CD4-positive, alpha-beta T cell (primary cell): ENCODE measurements at regions of chr10 and their contacts with region 1.

Region 1: GRCh38 chr10:91409869-91410637 is at the start of gene HECTD2:
- DNase-seq: peak; percentile 61 to 94 (median 82)
- ATAC-seq: peak; percentile 85
- H3K4me3 ChIP-seq: peak within 1 kb of the TSS; percentile 92
- H3K4me3 Mint-ChIP-seq: peak within 1 kb of the TSS; percentile 92
- H3K27ac ChIP-seq: peak within 1 kb of the TSS; percentile 82 to 86
- H3K27ac Mint-ChIP-seq: peak within 1 kb of the TSS; percentile 86
- H3K4me1 ChIP-seq: peaks cover 14% of the 10 kb centered on the region
- H3K4me1 Mint-ChIP-seq: peaks cover 11% of the 10 kb centered on the region
- H3K27me3 ChIP-seq: peaks cover 3 to 8% of the 10 kb centered on the region in 2 experiments
- H3K27me3 Mint-ChIP-seq: no peaks in the 10 kb centered on the region
- CTCF ChIP-seq: peak; percentile 19
- total RNA-seq, gene HECTD2: 0.92 to 1.0 TPM

Region 2: DNA sequence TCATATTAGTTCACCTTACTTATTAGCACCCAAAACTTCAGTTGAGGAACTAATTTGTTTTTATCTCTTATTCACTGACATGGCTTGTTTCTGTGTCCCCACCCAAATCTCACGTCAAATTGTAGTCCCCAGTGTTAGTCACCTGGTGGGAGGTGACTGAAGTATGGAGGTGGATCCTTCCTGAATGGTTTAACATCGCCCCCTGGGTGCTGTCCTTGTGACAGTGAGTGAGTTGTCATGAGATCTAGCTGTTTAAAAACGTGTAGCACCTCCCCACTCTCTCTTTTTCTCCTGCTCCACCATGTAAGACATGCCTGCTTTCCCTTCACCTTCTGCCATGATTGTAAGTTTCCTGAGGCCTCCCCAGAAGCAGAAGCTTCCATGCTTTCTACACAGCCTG is 74.9 kb before region 1 on chr10:
- CTCF ChIA-PET with region 1: no interaction called
- POLR2A ChIA-PET with region 1: no interaction called
- intact Hi-C with region 1: loop called in 1 of 2 experiments (anchors 2 kb)
- DNase-seq: no peak
- ATAC-seq: no peak
- H3K4me3 ChIP-seq: no peak overlapping the region
- H3K4me3 Mint-ChIP-seq: no peak overlapping the region
- H3K27ac ChIP-seq: no peak overlapping the region
- H3K27ac Mint-ChIP-seq: no peak overlapping the region
- H3K4me1 ChIP-seq: no peaks in the 10 kb centered on the region
- H3K4me1 Mint-ChIP-seq: no peaks in the 10 kb centered on the region
- H3K27me3 ChIP-seq: no peaks in the 10 kb centered on the region
- H3K27me3 Mint-ChIP-seq: peaks cover 7% of the 10 kb centered on the region
- CTCF ChIP-seq: no peak

Region 3: DNA sequence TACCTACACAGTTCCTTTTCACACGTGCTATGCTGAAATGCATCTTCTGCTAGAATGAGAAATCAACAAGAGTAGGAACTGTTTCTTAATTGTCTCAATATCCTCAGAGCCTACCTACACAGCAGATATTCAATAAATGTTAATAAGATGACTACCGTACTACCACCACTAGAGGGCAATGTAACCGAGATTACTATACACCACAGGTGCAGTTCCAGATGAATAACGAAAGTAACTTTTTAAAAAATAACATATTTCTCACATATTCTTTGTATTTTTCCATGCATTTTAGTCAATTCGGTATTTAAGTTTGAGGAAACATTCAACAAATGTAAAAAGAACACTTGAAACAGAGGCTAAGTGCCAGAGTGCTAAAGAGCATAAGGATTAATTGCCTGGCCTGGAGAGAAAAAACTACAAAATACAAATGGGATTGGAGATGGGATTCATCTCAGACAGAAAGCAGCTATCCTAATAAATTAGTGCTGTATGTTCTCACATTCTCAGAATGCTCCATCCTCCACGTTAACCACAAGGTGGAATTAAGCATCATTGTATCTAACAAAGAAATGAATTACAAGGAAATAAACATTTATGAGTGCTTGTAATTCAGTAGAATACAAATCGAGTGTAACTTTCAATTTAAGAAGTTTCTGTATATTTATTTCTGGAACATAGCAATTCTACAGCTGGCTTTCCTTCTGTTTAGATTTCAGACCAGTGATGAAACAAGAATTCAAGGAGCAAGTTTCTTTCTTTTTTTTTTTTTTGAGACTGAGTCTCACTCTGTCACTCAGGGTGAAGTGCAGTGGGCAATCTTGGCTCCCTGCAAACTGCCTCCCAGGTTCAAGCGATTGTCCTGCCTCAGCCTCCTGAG is 20.2 kb before region 1 on chr10:
- CTCF ChIA-PET with region 1: interaction called, 6 read pairs
- POLR2A ChIA-PET with region 1: interaction called, 3 read pairs
- intact Hi-C with region 1: loop called (anchors 1 to 2 kb)
- DNase-seq: peak in 4 of 14 experiments; percentile 31 to 85 (median 80)
- ATAC-seq: peak; percentile 99
- H3K4me3 ChIP-seq: no peak overlapping the region
- H3K4me3 Mint-ChIP-seq: no peak overlapping the region
- H3K27ac ChIP-seq: no peak overlapping the region
- H3K27ac Mint-ChIP-seq: no peak overlapping the region
- H3K4me1 ChIP-seq: no peaks in the 10 kb centered on the region
- H3K4me1 Mint-ChIP-seq: peaks cover 9% of the 10 kb centered on the region
- H3K27me3 ChIP-seq: peaks cover 0 to 10% of the 10 kb centered on the region in 2 experiments
- H3K27me3 Mint-ChIP-seq: peaks cover 28% of the 10 kb centered on the region
- CTCF ChIP-seq: peak; percentile 78

Region 4: DNA sequence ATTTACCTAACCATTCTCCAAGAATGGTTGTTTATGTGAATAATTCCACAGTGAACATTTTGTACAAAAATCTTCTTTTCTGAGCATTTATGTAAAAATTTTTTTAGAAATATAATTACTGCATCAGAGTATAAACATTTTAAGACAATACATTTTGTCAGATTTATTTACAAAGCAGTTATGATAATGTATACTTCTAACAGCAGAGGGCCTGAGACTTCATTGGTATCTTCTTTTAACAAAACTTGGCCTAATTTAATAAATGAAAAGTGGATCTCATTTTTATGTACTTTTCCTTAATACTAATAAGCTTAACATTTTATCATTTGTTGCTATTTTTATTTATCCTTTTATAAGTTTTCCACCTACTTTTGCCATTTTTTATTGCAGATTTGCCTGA is 69.5 kb after region 1 on chr10:
- CTCF ChIA-PET with region 1: no interaction called
- POLR2A ChIA-PET with region 1: no interaction called
- intact Hi-C with region 1: no loop called
- DNase-seq: no peak
- ATAC-seq: no peak
- H3K4me3 ChIP-seq: no peak overlapping the region
- H3K4me3 Mint-ChIP-seq: no peak overlapping the region
- H3K27ac ChIP-seq: no peak overlapping the region
- H3K27ac Mint-ChIP-seq: no peak overlapping the region
- H3K4me1 ChIP-seq: no peaks in the 10 kb centered on the region
- H3K4me1 Mint-ChIP-seq: no peaks in the 10 kb centered on the region
- H3K27me3 ChIP-seq: no peaks in the 10 kb centered on the region
- H3K27me3 Mint-ChIP-seq: no peaks in the 10 kb centered on the region
- CTCF ChIP-seq: no peak

Region 5: GRCh38 chr10:92156874-92157773 is 747.1 kb after region 1 on chr10:
- CTCF ChIA-PET with region 1: no interaction called
- POLR2A ChIA-PET with region 1: no interaction called
- intact Hi-C with region 1: no loop called
- DNase-seq: no peak
- ATAC-seq: no peak
- H3K4me3 ChIP-seq: no peak overlapping the region
- H3K4me3 Mint-ChIP-seq: no peak overlapping the region
- H3K27ac ChIP-seq: no peak overlapping the region
- H3K27ac Mint-ChIP-seq: no peak overlapping the region
- H3K4me1 ChIP-seq: no peaks in the 10 kb centered on the region
- H3K4me1 Mint-ChIP-seq: no peaks in the 10 kb centered on the region
- H3K27me3 ChIP-seq: no peaks in the 10 kb centered on the region
- H3K27me3 Mint-ChIP-seq: no peaks in the 10 kb centered on the region
- CTCF ChIP-seq: no peak